H1 (cell line): ENCODE measurements at regions of chr18 and their contacts with region 1.

Region 1: GRCh38 chr18:12049978-12050811 is 43.4 kb upstream of the ANKRD62 start:
- DNase-seq: no peak
- H3K4me3 ChIP-seq: no peak overlapping the region
- H3K27ac ChIP-seq: no peak overlapping the region
- H3K4me1 ChIP-seq: peaks cover 0 to 4% (median 0%) of the 10 kb centered on the region in 4 experiments; a peak in 1 of 7 replicates
- H3K27me3 ChIP-seq: no peaks in the 10 kb centered on the region; a peak in 1 of 7 replicates
- CTCF ChIP-seq: no peak
- EP300 ChIP-seq: no peak
- POLR2A ChIP-seq: no peak
- RAD21 ChIP-seq: no peak

Region 2: DNA sequence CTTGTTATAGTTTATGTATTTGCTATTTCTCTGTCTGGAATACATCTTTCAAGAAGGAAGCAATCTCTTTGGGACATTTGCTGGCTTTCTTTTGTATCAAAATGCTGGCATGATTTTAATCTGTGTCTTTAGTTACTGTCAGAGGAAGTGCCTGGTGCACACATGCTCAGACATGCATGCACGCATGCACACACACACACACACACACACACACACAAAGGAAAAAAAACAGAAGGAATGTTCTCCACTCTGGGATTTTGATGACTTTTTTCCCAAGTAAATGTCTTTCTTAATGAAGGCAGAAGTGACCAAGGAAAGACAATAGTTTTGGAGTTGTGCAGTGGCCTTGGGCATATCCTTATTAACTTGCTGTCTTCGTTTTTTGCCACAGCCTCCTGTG is 354.5 kb before region 1 on chr18:
- CTCF ChIA-PET with region 1: no interaction called
- POLR2A ChIA-PET with region 1: no interaction called
- DNase-seq: no peak
- H3K4me3 ChIP-seq: no peak overlapping the region
- H3K27ac ChIP-seq: no peak overlapping the region
- H3K4me1 ChIP-seq: no peaks in the 10 kb centered on the region
- H3K27me3 ChIP-seq: peaks cover 0 to 2% (median 0%) of the 10 kb centered on the region in 4 experiments; a peak in 2 of 7 replicates
- CTCF ChIP-seq: no peak
- EP300 ChIP-seq: no peak
- POLR2A ChIP-seq: no peak
- RAD21 ChIP-seq: no peak

Region 3: GRCh38 chr18:12038639-12039417 is 11.4 kb before region 1 on chr18:
- CTCF ChIA-PET with region 1: interaction called, 26 read pairs
- POLR2A ChIA-PET with region 1: interaction called, 3 read pairs
- DNase-seq: peak; percentile 50 to 94
- H3K4me3 ChIP-seq: peak overlapping the region; percentile 33 to 72 (median 65)
- H3K27ac ChIP-seq: no peak overlapping the region
- H3K4me1 ChIP-seq: no peaks in the 10 kb centered on the region
- H3K27me3 ChIP-seq: peaks cover 0 to 13% (median 10%) of the 10 kb centered on the region in 4 experiments; a peak in 6 of 7 replicates
- CTCF ChIP-seq: peak; percentile 95 to 98 (median 95)
- EP300 ChIP-seq: no peak
- POLR2A ChIP-seq: no peak
- RAD21 ChIP-seq: peak; percentile 93 to 96

Region 4: DNA sequence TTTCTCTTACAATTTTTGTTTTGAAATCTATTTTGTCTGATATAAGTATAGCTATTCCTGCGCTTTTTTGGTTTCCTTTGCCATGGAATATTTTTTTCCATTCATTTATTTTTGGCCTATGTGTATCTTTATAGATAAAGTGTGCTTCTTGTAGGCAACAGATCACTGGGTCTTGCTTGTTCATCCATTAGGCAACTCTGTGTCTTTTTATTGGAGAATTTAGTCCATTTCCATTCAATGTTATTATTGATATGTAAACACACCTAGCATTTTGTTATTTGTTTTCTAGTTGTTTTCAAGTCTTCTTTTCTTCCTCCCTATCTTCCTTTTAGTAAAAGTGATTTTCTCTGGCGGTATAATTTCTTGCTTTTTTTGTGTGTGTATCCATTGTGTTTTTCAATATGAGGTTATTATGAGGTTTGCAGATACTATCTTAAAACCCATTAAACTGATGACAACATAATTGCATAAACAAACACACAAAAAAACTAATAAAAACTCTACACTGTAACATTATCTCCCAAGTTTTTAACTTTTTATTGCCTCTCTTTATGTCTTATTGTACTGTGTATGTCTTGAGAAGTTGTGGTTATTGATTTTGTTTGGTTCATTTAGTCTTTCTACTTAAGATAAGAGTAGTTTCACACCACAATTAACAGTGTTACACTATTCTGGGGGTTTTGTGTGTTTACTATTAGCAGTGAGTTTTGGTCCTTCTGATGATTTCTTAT is 115.0 kb after region 1 on chr18:
- CTCF ChIA-PET with region 1: no interaction called
- POLR2A ChIA-PET with region 1: no interaction called
- DNase-seq: no peak
- H3K4me3 ChIP-seq: no peak overlapping the region
- H3K27ac ChIP-seq: no peak overlapping the region
- H3K4me1 ChIP-seq: no peaks in the 10 kb centered on the region
- H3K27me3 ChIP-seq: no peaks in the 10 kb centered on the region
- CTCF ChIP-seq: no peak
- EP300 ChIP-seq: no peak
- POLR2A ChIP-seq: no peak
- RAD21 ChIP-seq: no peak